ENCODE measurements at regions of chr17 and their contacts with region 1.

Region 1: DNA sequence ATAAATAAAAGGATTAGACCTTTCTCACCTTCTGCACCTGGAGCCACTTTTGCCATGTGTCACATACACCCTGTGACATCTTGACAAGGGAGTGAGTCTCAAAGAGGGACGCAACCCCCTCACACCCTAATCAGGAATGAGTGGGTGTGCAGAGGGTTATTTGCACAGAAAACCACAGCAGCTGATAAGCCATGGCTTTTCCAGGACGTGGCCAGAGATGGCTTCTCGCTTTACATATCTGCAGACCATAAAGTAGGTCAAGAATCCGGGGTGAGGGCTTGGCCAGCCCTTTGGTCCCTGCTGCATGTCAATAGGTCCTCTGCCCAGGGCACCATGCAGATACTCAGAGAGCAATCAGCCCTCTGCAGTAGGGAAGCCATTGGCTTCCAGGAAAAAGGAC is 2.4 kb upstream of the CD300LF start:
- DNase-seq: no peak
- H3K4me3 ChIP-seq: no peak overlapping the region
- H3K27ac ChIP-seq: no peak overlapping the region
- H3K4me1 ChIP-seq: no peaks in the 10 kb centered on the region
- H3K27me3 ChIP-seq: no peaks in the 10 kb centered on the region
- CTCF ChIP-seq: no peak
- EP300 ChIP-seq: no peak
- RAD21 ChIP-seq: no peak

Region 2: GRCh38 chr17:74654742-74655141 is 60.4 kb before region 1 on chr17:
- CTCF ChIA-PET with region 1: interaction called, 26 read pairs
- POLR2A ChIA-PET with region 1: no interaction called
- DNase-seq: peak; percentile 47
- H3K4me3 ChIP-seq: no peak overlapping the region
- H3K27ac ChIP-seq: no peak overlapping the region
- H3K4me1 ChIP-seq: peaks cover 0 to 13% of the 10 kb centered on the region in 2 experiments; a peak in 1 of 4 replicates
- H3K27me3 ChIP-seq: no peaks in the 10 kb centered on the region
- CTCF ChIP-seq: no peak
- EP300 ChIP-seq: no peak
- RAD21 ChIP-seq: no peak

Measured in SK-N-SH (cell line).